GM23248 (cell line): ENCODE measurements at regions of chr14 and their contacts with region 1.

Region 1: GRCh38 chr14:24436355-24437019 is 6.1 kb downstream of the SDR39U1 start:
- DNase-seq: peak; percentile 90
- H3K4me3 ChIP-seq: no peak overlapping the region
- H3K27ac ChIP-seq: peak overlapping the region; percentile 49
- H3K4me1 ChIP-seq: peaks cover 28% of the 10 kb centered on the region
- H3K27me3 ChIP-seq: no peaks in the 10 kb centered on the region

Region 2: GRCh38 chr14:24095271-24096068 is 341.0 kb before region 1 on chr14:
- in situ Hi-C with region 1: no loop called
- DNase-seq: peak; percentile 77
- H3K4me3 ChIP-seq: peak overlapping the region; percentile 94
- H3K27ac ChIP-seq: peak overlapping the region; percentile 70; the same call in 1 of the 2 replicates
- H3K4me1 ChIP-seq: peaks cover 10% of the 10 kb centered on the region
- H3K27me3 ChIP-seq: no peaks in the 10 kb centered on the region

Region 3: GRCh38 chr14:24241829-24242443 is 194.6 kb before region 1 on chr14:
- in situ Hi-C with region 1: no loop called
- DNase-seq: peak; percentile 99
- H3K4me3 ChIP-seq: peak overlapping the region; percentile 97
- H3K27ac ChIP-seq: peak overlapping the region; percentile 98
- H3K4me1 ChIP-seq: peaks cover 33% of the 10 kb centered on the region
- H3K27me3 ChIP-seq: no peaks in the 10 kb centered on the region

Region 4: GRCh38 chr14:24339284-24340151 is 97.0 kb before region 1 on chr14 and contains the start of gene RIPK3:
- in situ Hi-C with region 1: loop called (anchors 5 kb)
- DNase-seq: peak; percentile 42
- H3K4me3 ChIP-seq: peak within 1 kb of the TSS; percentile 73
- H3K27ac ChIP-seq: no peak within 1 kb of the TSS
- H3K4me1 ChIP-seq: no peaks in the 10 kb centered on the region
- H3K27me3 ChIP-seq: no peaks in the 10 kb centered on the region
- total RNA-seq, gene RIPK3: 2.2 and 5.3 TPM in 2 replicates